Mammary epithelial cell (primary cell): ENCODE measurements at regions of chr4 and their contacts with region 1.

Region 1: GRCh38 chr4:1351854-1352633 is 5.0 kb downstream of the UVSSA start:
- DNase-seq: peak; percentile 59
- H3K4me3 ChIP-seq: no peak overlapping the region
- H3K27ac ChIP-seq: no peak overlapping the region
- H3K4me1 ChIP-seq: peaks cover 16% of the 10 kb centered on the region
- H3K27me3 ChIP-seq: no peaks in the 10 kb centered on the region
- CTCF ChIP-seq: peak; percentile 87 to 98

Region 2: DNA sequence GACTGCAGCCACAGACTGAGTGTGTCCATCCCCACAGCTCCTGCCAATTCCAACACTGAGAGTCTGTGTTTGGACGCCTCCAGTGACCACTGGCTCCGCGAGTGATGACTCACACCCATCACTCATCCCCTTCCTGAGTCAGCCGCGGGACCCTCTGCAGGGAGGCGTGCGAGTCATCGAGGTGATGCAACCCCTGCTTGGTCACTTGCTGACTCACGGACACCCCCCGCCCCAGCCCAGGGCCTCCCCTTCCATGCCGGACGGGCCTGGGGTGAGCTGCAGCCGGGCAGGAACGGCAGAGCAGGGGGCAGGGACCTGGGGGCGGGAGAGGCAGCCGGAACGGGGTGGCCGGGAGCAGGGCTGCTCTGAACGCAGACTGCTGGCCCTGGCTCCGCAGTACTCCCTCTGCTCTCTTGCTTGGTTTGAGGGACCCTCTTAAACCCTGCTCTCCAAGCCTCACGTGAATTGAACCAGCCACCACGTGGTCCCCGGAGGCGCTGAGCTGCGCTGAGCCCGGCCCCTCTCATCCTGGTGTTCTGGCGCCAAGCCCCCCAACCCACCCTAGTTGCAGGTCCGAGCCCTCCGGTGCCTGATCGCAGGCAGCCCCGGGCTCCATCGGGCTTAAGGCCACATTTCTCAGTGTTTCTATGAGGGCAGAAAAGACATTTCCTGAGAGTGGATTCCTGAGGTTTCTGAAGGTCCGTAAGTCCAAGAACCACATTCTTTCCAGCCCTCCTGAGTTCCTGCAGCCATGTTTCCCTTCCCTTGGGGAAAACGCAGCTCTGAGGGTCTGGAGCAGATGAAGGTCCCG is 308.2 kb before region 1 on chr4:
- CTCF ChIA-PET with region 1: no interaction called
- dilution Hi-C with region 1: loop called (anchors 10 kb)
- in situ Hi-C with region 1: no loop called
- intact Hi-C with region 1: no loop called
- DNase-seq: peak; percentile 99
- H3K4me3 ChIP-seq: peak overlapping the region in 1 of 3 experiments; percentile 1
- H3K27ac ChIP-seq: peak overlapping the region; percentile 31
- H3K4me1 ChIP-seq: peaks cover 48% of the 10 kb centered on the region
- H3K27me3 ChIP-seq: no peaks in the 10 kb centered on the region
- CTCF ChIP-seq: no peak

Region 3: GRCh38 chr4:1167247-1167949 is 184.6 kb before region 1 on chr4:
- CTCF ChIA-PET with region 1: no interaction called
- dilution Hi-C with region 1: no loop called
- in situ Hi-C with region 1: no loop called
- intact Hi-C with region 1: loop called (anchors 1 kb)
- DNase-seq: peak; percentile 31
- H3K4me3 ChIP-seq: peak overlapping the region in 1 of 3 experiments; percentile 43
- H3K27ac ChIP-seq: no peak overlapping the region
- H3K4me1 ChIP-seq: peaks cover 4% of the 10 kb centered on the region
- H3K27me3 ChIP-seq: peaks cover 22% of the 10 kb centered on the region
- CTCF ChIP-seq: peak; percentile 67 to 92

Region 4: GRCh38 chr4:1289207-1290164 is 62.6 kb before region 1 on chr4 and contains the start of gene MAEA:
- CTCF ChIA-PET with region 1: interaction called, 3 read pairs
- dilution Hi-C with region 1: no loop called
- in situ Hi-C with region 1: loop called in 1 of 2 experiments (anchors 10 kb)
- intact Hi-C with region 1: loop called (anchors 1 kb)
- DNase-seq: peak; percentile 96
- H3K4me3 ChIP-seq: peak within 1 kb of the TSS; percentile 77 to 94 (median 79)
- H3K27ac ChIP-seq: peak within 1 kb of the TSS; percentile 80
- H3K4me1 ChIP-seq: peaks cover 26% of the 10 kb centered on the region
- H3K27me3 ChIP-seq: no peaks in the 10 kb centered on the region
- CTCF ChIP-seq: no peak
- total RNA-seq, gene MAEA: 80.4 to 109 TPM

Region 5: GRCh38 chr4:1604711-1605205 is 252.7 kb after region 1 on chr4:
- CTCF ChIA-PET with region 1: no interaction called
- dilution Hi-C with region 1: no loop called
- in situ Hi-C with region 1: no loop called
- intact Hi-C with region 1: loop called (anchors 1 kb)
- DNase-seq: no peak
- H3K4me3 ChIP-seq: no peak overlapping the region
- H3K27ac ChIP-seq: no peak overlapping the region
- H3K4me1 ChIP-seq: peaks cover 21% of the 10 kb centered on the region
- H3K27me3 ChIP-seq: peaks cover 5% of the 10 kb centered on the region
- CTCF ChIP-seq: peak; percentile 19 to 65

Region 6: DNA sequence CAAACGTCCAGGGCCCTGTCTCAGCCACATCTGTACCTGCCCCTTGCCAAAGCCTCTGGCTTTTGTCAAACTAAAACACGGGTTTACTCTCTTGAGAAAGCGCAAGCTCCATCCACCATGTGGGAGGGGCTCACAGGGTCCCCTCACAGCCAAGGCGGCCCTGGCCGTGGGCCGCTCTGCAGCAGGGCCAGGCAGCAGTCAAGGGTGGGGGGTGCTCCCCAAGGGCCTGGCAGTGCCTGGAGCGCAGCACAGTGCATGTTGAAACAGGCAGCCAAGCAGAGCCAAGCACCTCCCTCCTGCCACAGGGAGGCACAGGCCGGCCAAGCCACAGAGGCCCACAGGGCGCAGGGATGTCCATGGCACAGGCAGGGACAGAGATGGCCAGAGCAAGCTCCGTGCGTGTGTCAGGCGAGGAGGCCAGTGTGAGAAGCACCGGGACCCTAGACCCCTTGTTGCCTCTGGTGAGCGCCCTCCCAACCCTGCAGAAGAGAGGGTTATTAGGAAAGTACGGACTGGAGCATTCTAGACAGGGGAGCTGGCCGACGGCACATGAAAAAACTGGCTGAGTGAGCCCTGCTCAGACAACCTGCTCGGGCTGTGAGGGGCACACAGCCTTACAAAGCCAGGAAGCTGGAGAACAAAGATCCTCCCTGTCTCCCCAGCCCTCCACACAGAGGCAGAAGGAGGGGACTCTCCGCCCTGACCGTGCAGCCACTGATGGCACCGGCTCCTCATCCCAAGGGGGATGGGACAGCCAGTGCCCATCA is 293.0 kb after region 1 on chr4:
- CTCF ChIA-PET with region 1: no interaction called
- dilution Hi-C with region 1: loop called (anchors 10 kb)
- in situ Hi-C with region 1: loop called in 1 of 2 experiments (anchors 25 kb)
- intact Hi-C with region 1: no loop called
- DNase-seq: peak; percentile 62
- H3K4me3 ChIP-seq: no peak overlapping the region
- H3K27ac ChIP-seq: no peak overlapping the region
- H3K4me1 ChIP-seq: peaks cover 13% of the 10 kb centered on the region
- H3K27me3 ChIP-seq: peaks cover 2% of the 10 kb centered on the region
- CTCF ChIP-seq: peak in 1 of 2 donors; percentile 4

Region 7: DNA sequence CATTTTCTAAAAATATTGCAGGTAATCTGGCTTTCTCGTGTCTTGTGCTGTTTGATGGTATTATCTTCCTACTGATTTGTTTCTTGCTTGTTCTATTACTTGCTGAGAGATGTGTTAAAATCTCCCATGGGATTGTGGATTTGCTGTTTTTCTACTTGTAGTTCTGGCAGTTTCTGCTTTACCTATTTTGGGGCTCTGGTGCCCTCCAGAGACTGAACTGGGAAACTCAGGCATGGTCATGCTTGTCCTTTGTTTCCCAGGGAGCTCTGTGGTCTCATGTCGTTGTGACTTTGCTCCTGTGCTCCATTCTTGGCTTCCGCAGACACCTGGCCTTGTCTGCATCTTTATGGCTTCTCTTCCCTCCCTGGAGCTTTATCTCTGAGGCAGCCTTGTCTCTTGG is 558.6 kb after region 1 on chr4:
- CTCF ChIA-PET with region 1: no interaction called
- dilution Hi-C with region 1: no loop called
- in situ Hi-C with region 1: no loop called
- intact Hi-C with region 1: loop called (anchors 5 kb)
- DNase-seq: peak; percentile 29
- H3K4me3 ChIP-seq: no peak overlapping the region
- H3K27ac ChIP-seq: no peak overlapping the region
- H3K4me1 ChIP-seq: peaks cover 15% of the 10 kb centered on the region
- H3K27me3 ChIP-seq: no peaks in the 10 kb centered on the region
- CTCF ChIP-seq: peak; percentile 57 to 76